Activated CD8-positive, alpha-beta T cell treated with anti-CD3 and anti-CD28 coated beads for 36 hours (primary cell): ENCODE measurements at regions of chr5 and their contacts with region 1.

Region 1: GRCh38 chr5:137660349-137660817 is 75.5 kb downstream of the KLHL3 start:
- DNase-seq: peak; percentile 90
- ATAC-seq: peak; percentile 97
- H3K4me3 Mint-ChIP-seq: no peak overlapping the region
- H3K27ac Mint-ChIP-seq: no peak overlapping the region
- H3K4me1 Mint-ChIP-seq: peaks cover 9% of the 10 kb centered on the region
- H3K27me3 Mint-ChIP-seq: no peaks in the 10 kb centered on the region
- CTCF ChIP-seq: peak; percentile 76

Region 2: DNA sequence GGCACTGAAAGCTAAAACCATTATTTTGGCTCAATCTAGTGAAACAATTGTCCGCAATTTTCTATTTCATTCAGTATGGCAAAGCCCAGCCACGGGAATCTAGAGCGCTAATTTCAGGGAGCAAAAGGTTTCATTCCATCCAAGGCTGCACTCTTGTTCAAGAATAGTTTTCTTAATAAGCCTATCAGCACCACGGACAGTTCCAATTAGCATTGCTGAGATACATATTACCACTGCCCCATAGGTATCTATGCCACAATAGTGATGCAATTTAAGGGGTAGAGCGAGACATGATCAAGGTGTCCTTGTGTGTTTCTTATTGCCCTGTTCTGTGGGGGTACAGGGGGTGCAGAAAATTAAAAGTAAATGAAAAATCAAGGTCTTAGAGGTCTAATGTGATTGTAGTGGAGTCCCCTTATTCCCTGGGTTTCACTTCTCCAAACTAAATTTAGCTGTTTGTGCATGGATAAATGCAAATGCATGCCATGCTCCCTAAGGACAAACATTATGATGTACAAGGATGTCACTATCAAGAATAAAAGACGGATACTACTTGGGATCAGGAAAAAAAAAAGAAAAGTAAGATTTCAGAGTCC is 206.8 kb before region 1 on chr5:
- CTCF ChIA-PET with region 1: no interaction called
- POLR2A ChIA-PET with region 1: no interaction called
- intact Hi-C with region 1: no loop called
- DNase-seq: peak; percentile 7
- ATAC-seq: no peak
- H3K4me3 Mint-ChIP-seq: no peak overlapping the region
- H3K27ac Mint-ChIP-seq: no peak overlapping the region
- H3K4me1 Mint-ChIP-seq: no peaks in the 10 kb centered on the region
- H3K27me3 Mint-ChIP-seq: no peaks in the 10 kb centered on the region
- CTCF ChIP-seq: no peak

Region 3: DNA sequence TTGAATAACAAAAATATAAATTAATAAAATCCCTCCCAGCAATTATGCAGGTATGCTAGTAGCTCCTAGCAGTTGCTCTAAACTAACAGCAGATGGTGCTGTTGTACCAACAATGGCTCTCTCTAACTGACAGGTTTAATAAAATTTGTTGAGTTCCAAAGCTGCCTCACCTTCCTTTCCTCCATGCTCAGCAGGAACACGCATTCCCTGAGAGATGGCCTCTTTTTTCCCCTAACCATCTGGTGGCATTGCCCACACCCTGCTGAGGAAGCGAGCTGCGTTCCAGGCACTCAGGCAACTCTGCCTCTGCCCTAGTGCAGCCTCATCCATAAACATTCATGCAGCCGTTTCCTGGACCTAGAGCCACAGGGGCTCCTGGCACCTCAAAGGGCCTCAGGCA is 30.7 kb before region 1 on chr5:
- CTCF ChIA-PET with region 1: interaction called, 34 read pairs
- POLR2A ChIA-PET with region 1: no interaction called
- intact Hi-C with region 1: no loop called
- DNase-seq: peak; percentile 8
- ATAC-seq: peak; percentile 82
- H3K4me3 Mint-ChIP-seq: no peak overlapping the region
- H3K27ac Mint-ChIP-seq: no peak overlapping the region
- H3K4me1 Mint-ChIP-seq: no peaks in the 10 kb centered on the region
- H3K27me3 Mint-ChIP-seq: no peaks in the 10 kb centered on the region
- CTCF ChIP-seq: peak; percentile 94

Region 4: DNA sequence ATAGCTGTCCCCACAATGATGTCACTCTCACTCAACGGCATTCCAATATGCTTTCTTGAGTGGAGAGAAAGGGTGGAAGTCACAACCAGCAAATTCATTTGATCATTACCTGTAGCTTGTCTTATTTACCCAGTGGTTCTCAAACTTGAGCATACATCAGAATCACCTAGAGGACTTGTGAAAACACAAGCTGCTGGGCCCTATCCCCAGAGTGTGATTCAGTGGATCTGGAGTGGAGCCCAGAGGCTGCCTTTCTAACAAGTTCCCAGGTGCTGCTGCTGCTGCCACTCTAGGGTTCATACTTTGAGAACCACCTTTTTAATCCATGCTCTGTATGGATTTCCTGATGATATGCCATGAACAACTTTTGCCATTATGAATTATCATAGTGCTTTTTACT is 19.2 kb before region 1 on chr5:
- CTCF ChIA-PET with region 1: interaction called, 14 read pairs
- POLR2A ChIA-PET with region 1: interaction called, 3 read pairs
- intact Hi-C with region 1: no loop called
- DNase-seq: no peak
- ATAC-seq: no peak
- H3K4me3 Mint-ChIP-seq: no peak overlapping the region
- H3K27ac Mint-ChIP-seq: no peak overlapping the region
- H3K4me1 Mint-ChIP-seq: no peaks in the 10 kb centered on the region
- H3K27me3 Mint-ChIP-seq: no peaks in the 10 kb centered on the region
- CTCF ChIP-seq: no peak

Region 5: DNA sequence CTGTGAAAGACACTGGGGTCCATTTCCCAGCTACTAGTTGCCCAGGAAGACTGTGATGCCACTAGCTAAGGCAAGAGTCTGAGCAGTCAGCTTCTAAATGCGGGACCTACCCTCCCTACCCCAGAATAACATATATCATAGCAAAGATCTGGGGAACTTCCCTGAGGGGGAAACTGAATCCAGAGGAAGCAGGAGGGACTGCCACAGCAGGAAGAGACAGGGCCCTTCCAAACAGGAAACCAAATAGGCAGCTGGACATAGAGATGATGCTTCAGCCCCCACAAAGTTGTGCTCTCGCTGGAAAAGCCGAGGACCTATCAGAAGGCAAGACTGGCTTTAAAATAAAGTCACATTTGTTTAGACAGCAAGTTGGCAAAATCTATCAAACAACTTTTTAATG is 24.4 kb after region 1 on chr5:
- CTCF ChIA-PET with region 1: interaction called, 10 read pairs
- POLR2A ChIA-PET with region 1: no interaction called
- intact Hi-C with region 1: no loop called
- DNase-seq: no peak
- ATAC-seq: no peak
- H3K4me3 Mint-ChIP-seq: no peak overlapping the region
- H3K27ac Mint-ChIP-seq: no peak overlapping the region
- H3K4me1 Mint-ChIP-seq: no peaks in the 10 kb centered on the region
- H3K27me3 Mint-ChIP-seq: no peaks in the 10 kb centered on the region
- CTCF ChIP-seq: no peak

Region 6: GRCh38 chr5:137695651-137696428 is 35.5 kb after region 1 on chr5:
- CTCF ChIA-PET with region 1: interaction called, 35 read pairs
- POLR2A ChIA-PET with region 1: no interaction called
- intact Hi-C with region 1: no loop called
- DNase-seq: peak; percentile 15
- ATAC-seq: peak; percentile 53
- H3K4me3 Mint-ChIP-seq: peak overlapping the region; percentile 39
- H3K27ac Mint-ChIP-seq: peak overlapping the region; percentile 92
- H3K4me1 Mint-ChIP-seq: peaks cover 40% of the 10 kb centered on the region
- H3K27me3 Mint-ChIP-seq: no peaks in the 10 kb centered on the region
- CTCF ChIP-seq: peak; percentile 26

Region 7: GRCh38 chr5:137712139-137712667 is 51.8 kb after region 1 on chr5:
- CTCF ChIA-PET with region 1: interaction called, 11 read pairs
- POLR2A ChIA-PET with region 1: no interaction called
- intact Hi-C with region 1: no loop called
- DNase-seq: no peak
- ATAC-seq: no peak
- H3K4me3 Mint-ChIP-seq: no peak overlapping the region
- H3K27ac Mint-ChIP-seq: no peak overlapping the region
- H3K4me1 Mint-ChIP-seq: peaks cover 2% of the 10 kb centered on the region
- H3K27me3 Mint-ChIP-seq: no peaks in the 10 kb centered on the region
- CTCF ChIP-seq: no peak

Region 8: GRCh38 chr5:137728048-137728447 is 67.7 kb after region 1 on chr5:
- CTCF ChIA-PET with region 1: interaction called, 540 read pairs
- POLR2A ChIA-PET with region 1: interaction called, 4 read pairs
- intact Hi-C with region 1: no loop called
- DNase-seq: no peak
- ATAC-seq: no peak
- H3K4me3 Mint-ChIP-seq: no peak overlapping the region
- H3K27ac Mint-ChIP-seq: no peak overlapping the region
- H3K4me1 Mint-ChIP-seq: peaks cover 27% of the 10 kb centered on the region
- H3K27me3 Mint-ChIP-seq: no peaks in the 10 kb centered on the region
- CTCF ChIP-seq: no peak